Breast epithelium (tissue), 4 donors: ENCODE measurements at regions of chr7 and their contacts with region 1.

Region 1: GRCh38 chr7:4996696-4997222 is 37.8 kb upstream of the MMD2 start:
- DNase-seq: no peak
- H3K4me3 ChIP-seq: no peak overlapping the region
- H3K27ac ChIP-seq: no peak overlapping the region
- H3K4me1 ChIP-seq: no peaks in the 10 kb centered on the region
- H3K27me3 ChIP-seq: no peaks in the 10 kb centered on the region
- CTCF ChIP-seq: no peak
- POLR2A ChIP-seq: no peak

Region 2: GRCh38 chr7:4470246-4470645 is 526.5 kb before region 1 on chr7:
- intact Hi-C with region 1: no loop called
- DNase-seq: no peak
- H3K4me3 ChIP-seq: no peak overlapping the region
- H3K27ac ChIP-seq: no peak overlapping the region
- H3K4me1 ChIP-seq: no peaks in the 10 kb centered on the region
- H3K27me3 ChIP-seq: no peaks in the 10 kb centered on the region
- CTCF ChIP-seq: no peak
- POLR2A ChIP-seq: no peak

Region 3: GRCh38 chr7:4937411-4937810 is 59.3 kb before region 1 on chr7:
- intact Hi-C with region 1: loop called (anchors 2 kb)
- DNase-seq: no peak
- H3K4me3 ChIP-seq: no peak overlapping the region
- H3K27ac ChIP-seq: no peak overlapping the region
- H3K4me1 ChIP-seq: no peaks in the 10 kb centered on the region
- H3K27me3 ChIP-seq: no peaks in the 10 kb centered on the region
- CTCF ChIP-seq: no peak
- POLR2A ChIP-seq: no peak

Region 4: GRCh38 chr7:5020097-5020496 is 23.3 kb after region 1 on chr7:
- intact Hi-C with region 1: no loop called
- DNase-seq: no peak
- H3K4me3 ChIP-seq: no peak overlapping the region
- H3K27ac ChIP-seq: no peak overlapping the region
- H3K4me1 ChIP-seq: no peaks in the 10 kb centered on the region
- H3K27me3 ChIP-seq: no peaks in the 10 kb centered on the region
- CTCF ChIP-seq: no peak
- POLR2A ChIP-seq: no peak

Region 5: DNA sequence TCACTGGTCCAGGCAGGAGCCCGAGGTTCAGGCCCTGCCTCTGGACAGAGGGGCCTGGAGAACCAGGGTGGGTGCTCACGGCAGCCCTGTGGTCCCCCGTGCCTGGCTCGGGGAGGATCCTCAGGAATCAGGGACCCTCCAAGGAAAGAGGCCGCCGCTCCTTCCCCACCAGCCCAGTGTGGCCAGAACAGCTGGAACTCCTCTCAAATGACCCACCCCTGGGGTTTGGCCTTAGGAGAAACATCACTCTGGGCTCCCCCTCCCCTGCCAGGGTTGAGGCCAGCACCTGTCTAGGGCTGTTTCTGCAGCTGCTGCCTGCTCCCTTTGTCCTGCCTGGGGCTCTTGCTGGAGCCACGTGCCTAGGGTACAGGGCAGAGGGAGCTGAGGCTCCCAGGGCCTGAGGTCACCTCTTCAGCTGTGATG is 623.7 kb after region 1 on chr7:
- intact Hi-C with region 1: loop called (anchors 5 kb)
- DNase-seq: no peak
- H3K4me3 ChIP-seq: no peak overlapping the region
- H3K27ac ChIP-seq: no peak overlapping the region
- H3K4me1 ChIP-seq: no peaks in the 10 kb centered on the region
- H3K27me3 ChIP-seq: no peaks in the 10 kb centered on the region
- CTCF ChIP-seq: no peak
- POLR2A ChIP-seq: no peak

Region 6: GRCh38 chr7:6026011-6026819 is 1029.5 kb after region 1 on chr7:
- intact Hi-C with region 1: no loop called
- DNase-seq: peak in 1 of 2 donors; percentile 26
- H3K4me3 ChIP-seq: peak overlapping the region; percentile 8 to 32 (median 27)
- H3K27ac ChIP-seq: peak overlapping the region; percentile 12 to 80
- H3K4me1 ChIP-seq: no peaks in the 10 kb centered on the region
- H3K27me3 ChIP-seq: no peaks in the 10 kb centered on the region
- CTCF ChIP-seq: no peak
- POLR2A ChIP-seq: no peak